ENCODE measurements at regions of chr17 and their contacts with region 1.

Region 1: DNA sequence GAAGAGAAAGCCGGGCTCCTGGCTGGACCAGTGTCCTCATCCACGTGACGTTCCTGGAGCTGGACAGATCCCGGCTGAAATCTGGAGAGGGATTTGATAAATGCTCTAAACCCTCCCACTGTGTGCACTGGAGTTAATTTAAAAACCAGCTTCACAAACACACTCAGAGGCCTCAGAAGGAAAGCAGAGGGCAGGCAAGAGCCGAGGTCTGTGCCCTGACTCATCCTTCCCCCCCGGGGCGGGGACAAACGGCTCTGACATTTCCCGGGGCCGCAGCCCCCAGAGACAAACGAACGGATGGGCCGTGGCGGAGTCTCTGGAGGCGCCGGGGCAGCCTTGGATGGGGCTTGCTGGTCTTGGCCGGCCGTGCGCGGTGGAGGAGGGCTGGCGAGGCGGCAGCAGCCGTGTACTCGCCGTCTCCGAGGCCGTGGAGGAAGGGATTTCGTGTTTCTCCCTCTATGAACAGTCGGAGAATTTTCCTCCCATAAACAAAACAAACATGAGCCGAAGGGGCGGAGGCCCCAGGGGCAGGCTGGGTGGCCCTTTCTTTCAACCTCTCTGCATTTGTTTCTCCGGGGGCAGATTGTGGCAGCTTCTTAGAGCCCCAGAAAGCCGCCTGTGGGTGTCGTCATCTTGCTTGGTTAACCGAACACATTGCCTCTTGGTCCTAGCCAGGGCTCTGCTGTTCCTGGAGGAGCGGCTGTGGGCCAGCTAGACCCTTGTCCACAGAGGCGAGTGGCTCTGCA is 94.3 kb downstream of the NTN1 start:
- DNase-seq: peak in 1 of 2 experiments; percentile 50
- H3K4me3 ChIP-seq: peak overlapping the region; percentile 43; the same call in 1 of the 2 replicates
- H3K27ac ChIP-seq: no peak overlapping the region
- H3K4me1 ChIP-seq: no peaks in the 10 kb centered on the region
- H3K27me3 ChIP-seq: no peaks in the 10 kb centered on the region
- CTCF ChIP-seq: no peak

Region 2: GRCh38 chr17:9162275-9162985 is 46.8 kb after region 1 on chr17:
- CTCF ChIA-PET with region 1: no interaction called
- POLR2A ChIA-PET with region 1: no interaction called
- intact Hi-C with region 1: no loop called
- DNase-seq: no peak
- H3K4me3 ChIP-seq: no peak overlapping the region
- H3K27ac ChIP-seq: no peak overlapping the region
- H3K4me1 ChIP-seq: no peaks in the 10 kb centered on the region
- H3K27me3 ChIP-seq: no peaks in the 10 kb centered on the region
- CTCF ChIP-seq: no peak

Region 3: DNA sequence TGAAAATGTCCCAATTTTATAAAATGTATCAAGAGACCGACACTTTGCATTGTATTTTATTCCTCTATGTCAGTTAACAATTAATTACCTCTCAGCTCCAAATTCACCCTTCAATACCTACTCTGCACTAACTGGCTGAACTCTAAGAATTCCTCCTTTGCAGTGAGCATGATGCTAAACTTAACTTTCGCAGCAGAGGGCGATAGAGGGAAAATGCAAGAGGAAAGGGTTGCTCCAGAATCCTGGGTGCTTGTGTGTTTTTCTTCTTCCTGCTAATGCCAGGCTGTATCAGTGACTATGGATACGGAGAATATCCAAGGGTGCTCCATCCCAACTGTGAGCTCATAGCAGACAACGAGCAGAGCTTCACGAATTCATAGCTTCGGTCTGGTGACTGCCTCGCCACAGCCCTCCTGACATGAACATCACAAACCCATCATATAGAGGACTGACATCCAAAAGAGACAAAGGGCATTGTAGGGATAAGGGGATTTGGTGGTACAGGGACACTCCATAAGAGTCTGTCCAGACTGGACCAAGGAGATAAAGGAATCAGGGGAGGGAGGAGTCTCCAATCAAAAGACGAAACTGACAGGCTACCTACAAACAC is 287.1 kb after region 1 on chr17:
- CTCF ChIA-PET with region 1: no interaction called
- POLR2A ChIA-PET with region 1: no interaction called
- intact Hi-C with region 1: loop called (anchors 10 kb)
- DNase-seq: peak in 1 of 2 experiments; percentile 21
- H3K4me3 ChIP-seq: no peak overlapping the region
- H3K27ac ChIP-seq: no peak overlapping the region
- H3K4me1 ChIP-seq: no peaks in the 10 kb centered on the region
- H3K27me3 ChIP-seq: no peaks in the 10 kb centered on the region
- CTCF ChIP-seq: peak; percentile 60